Activated CD4-positive, alpha-beta memory T cell treated with anti-CD3 and anti-CD28 coated beads for 36 hours (primary cell): ENCODE measurements at regions of chr5 and their contacts with region 1.

Region 1: DNA sequence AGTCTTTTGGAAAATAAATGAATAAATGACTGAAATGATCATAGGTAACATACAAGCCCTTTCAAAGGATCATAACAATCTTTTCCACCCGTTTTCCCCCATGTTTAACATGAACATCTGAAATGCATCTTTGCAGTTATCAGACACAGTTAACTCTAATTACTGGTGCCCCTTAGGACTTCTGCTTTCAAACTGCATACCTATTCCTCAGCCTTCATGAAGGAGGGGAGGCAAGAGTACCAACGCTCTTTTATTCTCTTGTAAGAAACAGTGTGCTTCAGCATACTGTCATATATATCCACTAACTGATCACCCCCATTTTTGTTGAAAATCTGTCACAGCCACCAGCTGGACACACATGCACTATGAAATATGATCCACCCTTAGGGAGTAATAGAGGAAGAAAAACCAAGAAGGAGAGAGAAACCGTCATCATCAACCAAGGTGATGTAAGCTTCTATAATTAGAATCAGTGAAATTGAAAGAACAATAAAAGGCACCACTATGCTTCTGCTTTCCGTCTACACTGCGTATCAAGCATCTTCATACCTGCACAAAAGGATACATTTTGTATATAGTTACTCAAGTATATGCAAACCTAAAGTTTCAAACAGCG is 98.7 kb downstream of the RAPGEF6 start:
- DNase-seq: no peak
- H3K4me3 Mint-ChIP-seq: peak overlapping the region; percentile 31
- H3K27ac Mint-ChIP-seq: peak overlapping the region; percentile 55
- H3K4me1 Mint-ChIP-seq: peaks cover 85% of the 10 kb centered on the region
- H3K27me3 Mint-ChIP-seq: no peaks in the 10 kb centered on the region

Region 2: DNA sequence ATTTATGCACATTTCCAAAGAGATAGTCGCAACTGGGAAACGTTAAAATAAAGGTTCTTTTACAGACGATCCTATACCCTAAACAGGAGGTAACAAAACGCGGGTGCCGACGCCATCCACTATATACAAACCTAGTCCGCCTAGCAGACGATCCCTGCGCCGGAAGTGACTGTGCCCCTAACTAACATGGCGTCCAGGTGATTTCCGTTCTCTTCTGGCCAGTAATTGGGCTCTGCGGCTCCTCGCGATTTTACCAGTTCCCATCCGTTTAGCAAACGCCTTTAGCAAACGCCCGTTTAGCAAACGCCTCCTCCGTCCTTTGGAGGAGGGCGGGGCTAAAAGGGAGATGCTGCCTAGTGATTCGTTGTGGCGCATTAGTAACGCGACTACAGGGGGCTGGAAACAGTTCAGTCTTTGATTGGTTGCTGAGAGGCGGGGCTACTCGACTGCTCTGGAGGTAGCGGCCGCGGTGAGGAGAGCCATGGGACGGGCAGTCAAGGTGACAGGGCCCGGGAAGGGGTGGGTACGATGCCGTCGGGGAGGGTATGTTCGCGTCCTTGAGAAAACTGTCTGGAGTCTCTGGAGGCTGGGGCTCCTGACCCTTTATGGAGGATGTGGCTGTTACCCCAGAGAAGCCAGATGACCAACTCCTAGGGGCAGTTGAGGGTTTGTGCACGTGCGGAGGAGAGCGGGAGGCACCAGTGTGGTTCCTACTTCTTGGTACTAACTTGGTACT is 365.6 kb before region 1 on chr5 and contains the start of gene LYRM7:
- CTCF ChIA-PET with region 1: no interaction called
- POLR2A ChIA-PET with region 1: no interaction called
- intact Hi-C with region 1: loop called (anchors 10 kb)
- DNase-seq: peak; percentile 98
- H3K4me3 Mint-ChIP-seq: peak within 1 kb of the TSS; percentile 97
- H3K27ac Mint-ChIP-seq: peak within 1 kb of the TSS; percentile 92
- H3K4me1 Mint-ChIP-seq: peaks cover 37% of the 10 kb centered on the region
- H3K27me3 Mint-ChIP-seq: no peaks in the 10 kb centered on the region
- total RNA-seq, gene LYRM7: 16.6 to 18.6 TPM

Region 3: DNA sequence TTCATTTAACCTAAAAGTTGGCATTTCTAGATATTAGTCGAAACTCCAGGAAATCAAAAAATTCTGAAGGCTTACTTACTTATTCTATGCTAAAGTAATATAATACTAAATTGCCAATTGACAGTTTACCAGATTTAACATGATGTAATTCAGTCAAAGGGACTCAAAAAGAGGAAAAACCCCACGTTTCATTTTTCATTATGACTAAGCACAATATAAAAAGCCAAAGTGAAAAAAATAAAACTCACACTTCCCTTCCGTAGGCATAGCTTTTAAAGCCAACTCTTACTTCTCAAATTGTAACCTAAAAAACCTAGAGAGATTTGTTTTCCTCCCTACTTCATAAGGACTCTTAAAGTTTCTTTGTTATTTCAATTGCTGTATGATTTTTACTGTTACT is 47.9 kb before region 1 on chr5:
- CTCF ChIA-PET with region 1: no interaction called
- POLR2A ChIA-PET with region 1: no interaction called
- intact Hi-C with region 1: loop called (anchors 2 kb)
- DNase-seq: no peak
- H3K4me3 Mint-ChIP-seq: peak overlapping the region; percentile 16
- H3K27ac Mint-ChIP-seq: peak overlapping the region; percentile 70
- H3K4me1 Mint-ChIP-seq: peaks cover 30% of the 10 kb centered on the region
- H3K27me3 Mint-ChIP-seq: no peaks in the 10 kb centered on the region

Region 4: DNA sequence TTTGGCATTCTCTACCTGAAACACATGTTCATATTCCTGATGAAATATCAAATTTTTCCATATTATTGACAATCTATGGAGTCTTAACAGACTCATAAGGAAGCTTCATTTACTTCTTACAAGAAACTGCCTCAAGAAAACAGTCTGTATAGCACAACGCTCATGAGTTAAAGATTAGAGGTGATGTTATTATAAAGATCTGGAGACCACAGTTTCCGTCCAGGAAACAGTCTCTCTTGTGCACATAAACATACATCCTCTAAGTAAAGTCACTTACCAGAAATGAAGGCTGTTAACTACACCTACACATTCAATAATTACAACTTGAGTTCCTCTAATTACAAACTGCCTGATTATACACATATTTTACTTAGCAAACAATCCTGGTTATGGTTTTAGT is 11.9 kb after region 1 on chr5:
- CTCF ChIA-PET with region 1: interaction called, 8 read pairs
- POLR2A ChIA-PET with region 1: interaction called, 7 read pairs
- intact Hi-C with region 1: loop called (anchors 2 kb)
- DNase-seq: no peak
- H3K4me3 Mint-ChIP-seq: peak overlapping the region; percentile 86
- H3K27ac Mint-ChIP-seq: peak overlapping the region; percentile 92
- H3K4me1 Mint-ChIP-seq: peaks cover 70% of the 10 kb centered on the region
- H3K27me3 Mint-ChIP-seq: no peaks in the 10 kb centered on the region

Region 5: DNA sequence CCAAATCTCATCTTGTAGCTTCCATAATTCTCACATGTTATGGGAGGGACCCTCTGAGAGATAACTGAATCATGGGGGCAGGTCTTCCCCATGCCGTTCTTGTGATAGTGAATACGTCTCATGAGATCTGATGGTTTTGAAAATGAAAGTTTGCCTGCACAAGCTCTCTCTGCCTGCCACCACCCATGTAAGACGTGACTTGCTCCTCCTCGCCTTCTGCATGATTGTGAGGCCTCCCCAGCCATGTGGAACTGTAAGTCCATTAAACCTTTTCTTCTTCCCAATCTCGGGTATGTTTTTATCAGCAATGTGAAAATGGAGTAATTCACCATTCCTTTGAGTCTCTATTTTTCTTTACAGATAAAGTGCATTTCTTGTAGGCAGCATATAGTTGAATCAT is 327.4 kb after region 1 on chr5:
- CTCF ChIA-PET with region 1: no interaction called
- POLR2A ChIA-PET with region 1: no interaction called
- intact Hi-C with region 1: no loop called
- DNase-seq: no peak
- H3K4me3 Mint-ChIP-seq: no peak overlapping the region
- H3K27ac Mint-ChIP-seq: no peak overlapping the region
- H3K4me1 Mint-ChIP-seq: no peaks in the 10 kb centered on the region
- H3K27me3 Mint-ChIP-seq: no peaks in the 10 kb centered on the region

Region 6: GRCh38 chr5:132019857-132020555 is 483.7 kb after region 1 on chr5:
- CTCF ChIA-PET with region 1: no interaction called
- POLR2A ChIA-PET with region 1: no interaction called
- intact Hi-C with region 1: loop called (anchors 5 kb)
- DNase-seq: peak; percentile 91
- H3K4me3 Mint-ChIP-seq: peak overlapping the region; percentile 11
- H3K27ac Mint-ChIP-seq: peak overlapping the region; percentile 90
- H3K4me1 Mint-ChIP-seq: peaks cover 52% of the 10 kb centered on the region
- H3K27me3 Mint-ChIP-seq: peaks cover 22% of the 10 kb centered on the region

Region 7: DNA sequence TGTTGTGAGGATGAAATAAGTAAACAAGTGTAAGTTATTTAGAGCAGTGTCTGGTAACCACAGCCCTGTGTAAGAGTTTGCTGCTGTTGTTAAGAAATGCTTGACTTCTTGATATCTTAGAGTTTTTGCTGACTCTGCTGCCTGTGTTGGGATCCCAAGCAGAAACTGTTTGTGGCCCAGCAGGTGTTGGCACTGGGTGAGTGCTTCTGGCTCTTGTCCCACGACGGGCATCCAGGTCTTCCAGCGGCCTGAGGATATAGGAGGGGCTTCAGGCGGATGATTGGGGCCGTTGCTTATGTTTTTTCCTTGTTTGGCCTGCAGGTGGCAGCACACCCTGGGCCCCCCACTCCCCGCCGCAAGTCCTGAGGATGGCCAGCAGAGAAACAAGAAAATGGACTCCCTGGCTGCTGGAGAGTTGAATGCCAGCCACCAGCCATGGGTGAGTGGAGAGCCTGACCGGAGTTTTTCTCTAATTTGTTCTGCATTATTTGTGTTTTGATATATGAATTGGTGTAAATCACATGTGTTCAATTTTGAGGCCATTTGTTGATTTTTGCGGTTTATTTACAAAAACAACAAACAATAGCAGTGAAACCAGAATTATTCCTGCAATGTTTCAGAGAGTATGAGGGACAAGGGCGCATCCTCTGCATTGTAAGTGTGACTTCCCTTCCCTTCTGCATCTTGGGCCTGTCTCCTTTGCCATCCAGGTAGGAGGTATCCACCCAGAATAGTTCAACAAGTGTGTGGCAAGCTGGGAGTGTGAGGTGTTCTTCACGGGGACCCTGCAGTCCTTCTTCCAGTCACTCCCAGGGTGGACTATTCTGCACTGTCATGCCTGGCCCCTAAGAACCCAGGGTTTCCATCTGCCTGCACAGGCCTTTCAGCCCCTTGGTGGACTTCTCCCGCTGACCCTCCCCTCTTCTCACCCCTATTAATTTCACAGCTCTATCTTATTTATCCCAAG is 883.5 kb after region 1 on chr5:
- CTCF ChIA-PET with region 1: no interaction called
- POLR2A ChIA-PET with region 1: no interaction called
- intact Hi-C with region 1: loop called (anchors 10 kb)
- DNase-seq: peak; percentile 78
- H3K4me3 Mint-ChIP-seq: peak overlapping the region; percentile 15
- H3K27ac Mint-ChIP-seq: peak overlapping the region; percentile 83
- H3K4me1 Mint-ChIP-seq: peaks cover 89% of the 10 kb centered on the region
- H3K27me3 Mint-ChIP-seq: no peaks in the 10 kb centered on the region